ENCODE measurements at regions of chr5 and their contacts with region 1.

Region 1: GRCh38 chr5:66306105-66306843 is 162.2 kb downstream of the SREK1 start:
- DNase-seq: peak; percentile 29
- ATAC-seq: peak; percentile 75 to 82

Region 2: DNA sequence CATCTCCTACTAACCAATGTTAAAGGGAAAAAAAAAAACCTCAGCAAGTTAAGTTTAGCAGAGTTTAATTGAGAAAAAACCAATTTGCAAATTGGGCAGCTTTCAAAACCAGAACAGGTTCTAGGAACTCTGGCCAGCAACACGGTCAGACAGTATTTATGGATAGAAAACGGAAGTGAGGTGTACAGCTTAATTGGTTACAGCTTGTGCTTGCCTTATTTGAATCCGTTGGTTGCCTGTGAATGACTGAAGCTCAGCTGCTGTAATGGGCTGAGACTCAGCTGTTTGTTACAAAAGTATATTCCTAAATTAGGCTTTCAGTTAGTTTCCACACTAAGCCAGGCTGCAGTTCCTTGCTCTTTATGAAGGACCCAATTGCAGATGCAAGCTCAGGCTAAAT is 54.8 kb after region 1 on chr5:
- intact Hi-C with region 1: no loop called
- DNase-seq: no peak
- ATAC-seq: peak in 1 of 2 donors; percentile 27

Region 3: DNA sequence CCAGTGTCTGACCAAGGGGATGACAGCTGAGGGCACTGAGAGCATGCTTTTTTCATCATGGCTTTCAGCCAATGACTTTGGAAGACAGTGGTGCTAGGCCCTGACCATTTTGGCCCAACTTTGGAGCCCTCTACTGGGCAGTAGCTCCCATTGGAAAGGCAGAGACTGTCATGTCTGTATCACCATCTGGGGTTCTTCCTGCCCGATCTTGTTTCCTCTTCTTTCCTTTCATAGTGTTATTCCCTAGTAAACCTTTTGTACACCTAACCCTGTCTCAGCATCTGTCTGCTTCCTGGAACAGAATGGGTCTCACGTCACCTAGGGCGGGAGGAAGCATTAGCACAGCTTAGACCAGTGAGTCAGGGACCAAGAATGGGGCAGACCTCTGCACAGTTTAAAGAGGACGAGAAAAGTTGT is 192.5 kb after region 1 on chr5:
- intact Hi-C with region 1: loop called in 1 of 2 experiments (anchors 5 kb)
- DNase-seq: peak; percentile 19
- ATAC-seq: peak; percentile 92 to 97

Region 4: DNA sequence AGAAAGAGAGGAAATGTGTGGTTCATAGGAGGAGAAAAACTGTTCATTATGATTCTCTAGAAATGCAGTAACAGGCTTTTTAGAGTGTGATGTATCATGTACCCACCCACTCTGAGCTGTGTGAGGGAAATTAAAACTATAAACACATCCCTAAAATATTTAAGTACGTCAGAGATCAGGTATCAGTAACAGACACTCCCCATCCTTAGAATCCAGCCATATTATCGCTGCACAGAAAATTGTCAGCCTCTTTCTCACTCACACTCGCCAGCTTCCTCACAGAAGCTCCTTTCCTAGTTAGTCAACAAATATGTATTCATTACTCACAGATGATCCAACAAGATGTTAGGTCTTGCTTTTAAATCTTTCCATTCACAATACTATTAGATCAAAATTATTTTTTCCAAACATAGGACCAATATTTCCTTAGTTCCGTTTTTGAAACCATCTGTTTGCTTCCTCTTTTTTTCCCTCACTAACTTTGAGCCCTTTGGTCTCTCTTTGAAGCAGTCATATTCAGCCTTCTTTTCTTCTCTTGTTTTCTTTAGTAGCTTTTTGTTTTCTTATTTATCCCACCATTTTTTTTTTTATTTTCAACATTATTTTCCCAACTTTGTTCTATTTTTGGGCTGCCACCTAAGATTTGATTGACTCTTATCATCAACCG is 276.4 kb after region 1 on chr5:
- intact Hi-C with region 1: no loop called
- DNase-seq: no peak
- ATAC-seq: peak; percentile 45 to 87

Region 5: DNA sequence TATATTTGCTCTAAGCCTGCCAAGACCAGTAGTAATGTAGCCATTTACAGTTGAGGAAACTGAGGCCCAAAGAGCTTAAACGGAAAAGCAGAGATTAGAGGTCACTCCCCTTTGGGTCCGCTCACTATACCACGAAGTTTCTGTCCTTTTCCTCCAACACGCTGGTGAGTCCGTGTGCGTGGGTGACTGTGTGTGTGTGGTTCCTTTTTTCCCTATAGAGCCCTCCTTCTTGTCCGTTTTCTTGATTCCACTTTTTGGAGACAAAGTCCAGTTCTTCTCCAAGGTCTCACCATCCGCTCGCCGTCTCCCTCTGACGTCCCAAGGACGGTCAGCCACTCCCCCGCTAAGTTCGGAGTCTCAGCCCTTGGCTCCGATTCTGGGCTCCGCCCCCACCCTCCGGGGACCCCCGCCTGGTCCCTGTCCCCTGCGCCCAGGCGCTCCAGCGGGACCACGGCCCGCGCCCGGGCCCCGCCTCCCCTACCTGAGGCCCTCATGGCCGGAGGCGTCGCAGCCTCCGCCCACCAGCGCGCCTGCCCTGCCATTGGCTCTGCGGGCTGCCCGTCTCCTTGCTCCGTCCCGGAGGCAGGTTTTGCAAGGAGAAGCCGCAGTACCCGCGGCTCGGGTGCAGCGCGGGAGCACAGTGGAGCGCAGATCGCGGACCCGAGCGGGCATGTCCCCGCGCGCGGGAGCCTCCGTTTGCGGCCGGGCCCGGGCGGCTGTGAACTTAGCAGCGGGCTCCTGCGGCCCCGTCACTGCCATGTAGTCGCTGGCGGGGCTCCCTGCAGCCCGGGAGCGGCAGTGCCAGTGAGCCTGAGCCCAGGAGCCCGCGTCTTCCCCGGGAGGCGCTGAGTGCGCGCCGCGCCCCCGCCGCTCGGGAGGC is 289.7 kb after region 1 on chr5 and contains the start of gene MAST4:
- intact Hi-C with region 1: loop called in 1 of 2 experiments (anchors 10 kb)
- DNase-seq: peak; percentile 91
- ATAC-seq: peak; percentile 94 to 98
- total RNA-seq, gene MAST4: 41.1 to 64.8 TPM

Region 6: DNA sequence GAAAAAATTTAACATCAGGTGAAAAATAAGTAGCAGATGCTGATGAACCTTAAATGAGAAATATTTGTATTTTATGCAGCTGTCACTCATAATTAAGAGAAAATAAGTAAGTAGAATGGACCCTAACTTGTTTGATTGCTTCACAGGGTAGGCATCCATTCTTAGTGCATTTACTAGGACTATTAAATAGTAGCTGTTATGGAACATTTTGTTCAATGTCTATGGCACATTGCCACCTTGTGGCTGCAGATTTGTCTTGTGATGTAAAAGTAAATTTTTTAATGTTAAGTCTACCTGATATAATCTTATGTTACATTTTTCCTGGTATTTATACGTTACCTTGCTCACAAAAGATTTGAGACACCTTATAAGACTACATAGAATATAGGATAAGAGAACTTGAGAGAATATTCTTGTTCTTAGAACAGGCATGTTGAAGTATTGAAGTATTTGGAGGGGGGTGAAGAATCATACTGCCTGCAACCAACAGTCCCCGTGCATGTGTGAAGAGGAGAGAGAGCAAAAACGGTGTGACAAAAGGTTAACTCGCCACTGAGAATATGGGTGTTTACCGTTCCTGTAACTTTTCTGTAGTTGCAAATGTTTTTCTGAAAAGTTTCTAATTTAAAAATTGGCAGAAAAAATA is 451.0 kb after region 1 on chr5:
- intact Hi-C with region 1: loop called (anchors 2 to 5 kb)
- DNase-seq: peak; percentile 54
- ATAC-seq: peak; percentile 72

Region 7: GRCh38 chr5:67648201-67648671 is 1342.0 kb after region 1 on chr5:
- intact Hi-C with region 1: no loop called
- DNase-seq: peak; percentile 82
- ATAC-seq: peak; percentile 95 to 97

Measured in left cardiac atrium (tissue), 4 donors.